ENCODE measurements at regions of chr2 and their contacts with region 1.

Region 1: GRCh38 chr2:23414871-23415270 is 29.9 kb downstream of the KLHL29 start:
- DNase-seq: peak in 1 of 2 donors; percentile 57
- H3K4me3 ChIP-seq: no peak overlapping the region
- H3K27ac ChIP-seq: no peak overlapping the region
- H3K4me1 ChIP-seq: peaks cover 5 to 20% of the 10 kb centered on the region in 2 donors
- H3K27me3 ChIP-seq: no peaks in the 10 kb centered on the region
- CTCF ChIP-seq: no peak

Region 2: DNA sequence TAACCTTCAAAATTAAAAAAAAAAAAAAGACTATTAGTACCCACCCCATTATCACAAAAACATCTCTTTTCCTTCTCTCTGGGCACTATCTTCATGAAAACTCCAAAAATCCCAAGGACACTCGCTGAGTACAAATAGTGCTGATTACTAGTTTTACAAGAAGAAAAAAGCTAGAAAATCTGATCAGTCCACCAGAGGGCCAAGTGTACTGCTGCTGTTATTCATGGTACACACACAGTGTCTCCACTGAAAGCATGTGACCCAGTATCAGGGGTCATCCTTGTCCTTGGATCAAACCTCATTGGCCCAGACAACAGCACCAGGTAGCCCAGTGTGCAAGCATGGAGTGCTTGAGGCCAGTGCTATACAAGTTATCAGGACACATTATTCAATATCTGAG is 412.6 kb before region 1 on chr2:
- intact Hi-C with region 1: no loop called
- DNase-seq: no peak
- H3K4me3 ChIP-seq: no peak overlapping the region
- H3K27ac ChIP-seq: no peak overlapping the region
- H3K4me1 ChIP-seq: no peaks in the 10 kb centered on the region
- H3K27me3 ChIP-seq: no peaks in the 10 kb centered on the region
- CTCF ChIP-seq: no peak

Region 3: DNA sequence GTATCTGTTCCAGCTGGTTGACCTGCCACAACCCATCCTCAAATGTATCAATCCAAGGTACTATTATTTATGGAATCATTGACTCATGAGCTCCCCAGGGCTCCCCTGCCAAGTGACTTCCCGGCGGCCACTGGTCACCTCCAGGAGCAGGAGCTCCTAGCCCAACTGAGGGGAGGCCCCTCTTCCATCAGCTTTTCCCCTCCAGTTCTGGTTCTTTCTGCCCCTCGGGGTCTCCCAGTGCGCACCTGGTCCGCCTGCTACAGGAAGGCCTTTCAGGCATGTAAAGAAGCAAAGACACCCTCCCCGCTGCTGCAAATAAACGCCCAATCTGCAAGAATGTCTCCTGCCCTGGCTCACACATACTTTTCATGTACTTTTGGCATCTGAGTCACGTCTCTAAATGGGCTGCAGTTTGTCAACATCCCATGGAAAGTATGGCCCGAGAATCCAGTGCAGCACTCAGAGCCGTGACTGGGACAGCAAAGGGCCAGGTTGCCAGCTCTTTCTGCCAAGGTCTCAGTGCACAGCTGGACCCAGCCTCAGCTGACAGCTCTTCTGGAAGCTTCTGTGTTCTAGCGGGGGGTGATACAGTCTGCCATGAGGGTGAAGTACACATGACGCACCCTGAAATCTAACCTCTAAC is 11.5 kb after region 1 on chr2:
- intact Hi-C with region 1: loop called (anchors 1 kb)
- DNase-seq: peak; percentile 51 to 91
- H3K4me3 ChIP-seq: no peak overlapping the region
- H3K27ac ChIP-seq: peak overlapping the region; percentile 74 to 83
- H3K4me1 ChIP-seq: peaks cover 9 to 21% of the 10 kb centered on the region in 2 donors
- H3K27me3 ChIP-seq: no peaks in the 10 kb centered on the region
- CTCF ChIP-seq: no peak

Region 4: GRCh38 chr2:23497063-23497462 is 82.2 kb after region 1 on chr2:
- intact Hi-C with region 1: loop called (anchors 5 kb)
- DNase-seq: peak; percentile 39 to 86
- H3K4me3 ChIP-seq: no peak overlapping the region
- H3K27ac ChIP-seq: peak overlapping the region; percentile 51 to 66
- H3K4me1 ChIP-seq: peaks cover 21 to 42% of the 10 kb centered on the region in 2 donors
- H3K27me3 ChIP-seq: no peaks in the 10 kb centered on the region
- CTCF ChIP-seq: no peak